Motor neuron (in vitro differentiated cells): ENCODE measurements at regions of chr5 and their contacts with region 1.

Region 1: DNA sequence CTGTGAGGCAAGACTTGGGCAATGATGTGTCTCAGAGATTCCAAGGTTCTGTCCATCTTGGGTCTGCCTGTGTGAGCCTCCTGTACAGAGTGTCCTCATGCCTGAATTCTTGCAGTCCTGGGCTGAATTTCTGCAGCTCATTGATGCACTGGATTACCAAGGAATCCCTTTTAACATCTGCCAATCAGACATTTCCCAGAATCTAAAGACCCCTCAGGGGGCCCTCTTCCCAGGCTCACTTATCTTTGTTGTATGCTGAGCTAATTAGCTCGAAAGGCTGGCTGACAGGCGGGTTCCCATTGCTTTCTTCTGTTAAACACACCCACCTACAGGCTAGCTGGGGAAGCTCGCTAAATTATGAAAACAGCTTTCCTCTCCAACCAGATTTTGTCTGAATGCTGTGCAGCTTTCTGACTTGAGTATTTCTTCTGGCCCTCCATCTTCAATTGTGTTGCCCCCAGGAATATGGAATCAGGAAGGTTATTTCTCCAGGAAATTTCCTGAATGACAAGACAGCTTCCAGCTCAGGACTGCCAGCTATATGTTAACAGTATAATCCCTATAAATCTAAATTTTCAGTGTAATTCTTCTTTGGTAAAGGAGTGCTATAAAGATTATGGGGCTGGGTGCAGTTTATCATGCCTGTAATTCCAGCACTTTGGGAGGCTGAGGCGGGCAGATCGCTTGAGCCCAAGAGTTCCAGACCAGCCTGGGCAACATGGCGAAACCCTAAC is at the start of gene LIX1:
- ATAC-seq: peak; percentile 87 to 99 (median 94)
- H3K4me3 ChIP-seq: peak within 1 kb of the TSS in 2 of 5 donors; percentile 18 to 25
- H3K27ac ChIP-seq: no peak within 1 kb of the TSS
- H3K4me1 ChIP-seq: peaks cover 5 to 15% of the 10 kb centered on the region in 2 donors
- total RNA-seq, gene LIX1: 0.14 to 56.2 (median 1.1) TPM

Region 2: DNA sequence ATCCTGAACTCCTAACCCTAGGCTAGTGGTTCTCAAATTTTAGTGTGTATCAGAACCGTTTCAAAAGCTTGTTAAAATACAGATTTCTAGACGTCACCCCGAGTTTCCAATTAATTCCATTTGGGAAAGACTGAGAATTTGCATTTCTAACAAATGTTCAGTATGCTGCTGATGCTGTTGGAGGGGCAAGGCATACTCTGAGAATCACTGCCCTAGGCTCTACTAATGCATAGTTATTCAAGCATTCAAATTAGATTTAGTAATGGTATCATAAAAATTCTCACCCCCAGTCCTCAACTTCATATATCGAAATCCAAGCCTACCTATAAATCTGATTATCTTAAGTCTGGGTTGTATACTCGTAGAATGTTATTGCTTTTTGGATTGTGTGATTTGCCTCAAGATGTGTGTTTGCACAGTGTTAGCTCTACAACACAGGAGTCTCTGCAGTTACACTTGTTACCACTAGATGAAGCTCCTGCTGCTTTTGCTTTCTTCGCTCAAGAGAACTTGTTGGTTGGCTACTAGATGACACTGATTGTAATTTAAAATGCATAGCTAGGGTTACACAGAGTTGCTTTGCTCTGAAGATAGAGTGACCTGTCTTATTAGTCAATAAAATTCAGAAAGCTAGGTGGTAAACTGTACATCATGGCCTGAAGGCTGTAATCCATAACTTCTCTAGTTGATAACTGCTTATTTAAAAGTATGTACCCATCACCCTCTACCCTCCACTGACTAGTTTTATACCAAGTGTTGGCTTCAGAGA is 273.9 kb before region 1 on chr5:
- in situ Hi-C with region 1: loop called in 1 of 9 experiments (anchors 25 kb)
- ATAC-seq: peak in 7 of 8 experiments; percentile 37 to 97 (median 94)
- H3K4me3 ChIP-seq: no peak overlapping the region
- H3K27ac ChIP-seq: no peak overlapping the region
- H3K4me1 ChIP-seq: peaks cover 6 to 8% of the 10 kb centered on the region in 2 donors

Region 3: GRCh38 chr5:97044052-97044451 is 98.6 kb before region 1 on chr5:
- in situ Hi-C with region 1: loop called in 2 of 9 experiments (anchors 5 to 25 kb)
- ATAC-seq: peak in 4 of 8 experiments; percentile 35 to 90 (median 82)
- H3K4me3 ChIP-seq: no peak overlapping the region
- H3K27ac ChIP-seq: no peak overlapping the region
- H3K4me1 ChIP-seq: peaks cover 0 to under 1% of the 10 kb centered on the region in 2 donors